ENCODE measurements at regions of chr1 and their contacts with region 1.

Region 1: DNA sequence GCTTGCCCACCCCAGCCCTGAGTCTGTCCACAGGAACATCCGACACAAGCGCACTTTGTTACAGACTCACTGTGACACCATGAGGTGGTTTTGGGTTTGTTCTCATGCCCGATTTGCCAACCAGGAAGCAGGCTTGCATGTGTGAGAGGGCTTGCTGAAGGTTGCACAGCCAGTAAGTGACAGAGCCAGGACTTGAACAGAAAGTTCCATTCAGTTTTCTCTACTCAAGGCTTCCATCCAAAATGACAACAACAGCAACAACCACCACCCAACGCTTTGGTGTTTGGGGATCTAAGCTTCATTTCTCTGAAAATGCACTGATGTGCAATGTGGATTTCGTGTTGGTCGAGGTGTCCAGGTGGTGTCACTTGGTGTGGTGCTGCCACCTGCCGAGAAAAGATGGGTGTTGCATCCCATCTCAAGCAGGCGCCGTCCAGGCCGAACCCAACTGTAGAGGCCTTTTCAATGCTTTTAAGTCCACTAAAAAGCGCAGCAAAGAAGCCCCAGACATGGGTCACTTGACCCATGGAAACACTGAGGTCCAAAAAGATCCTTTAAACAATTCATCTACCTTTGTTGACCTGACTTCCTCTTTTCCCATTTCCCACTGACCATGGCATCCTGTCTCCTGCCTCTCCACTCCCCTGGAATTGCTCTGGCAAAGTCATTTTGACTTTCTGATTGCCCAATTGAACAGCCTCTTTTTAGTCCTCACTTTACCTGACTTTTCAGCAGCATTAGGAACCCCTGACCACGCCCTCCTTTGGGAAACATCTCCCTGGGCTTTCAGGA is 12.2 kb downstream of the CITED4 start:
- DNase-seq: peak; percentile 70
- H3K4me3 Mint-ChIP-seq: no peak overlapping the region
- H3K27ac Mint-ChIP-seq: peak overlapping the region; percentile 4
- H3K4me1 Mint-ChIP-seq: peaks cover 34% of the 10 kb centered on the region
- H3K27me3 Mint-ChIP-seq: no peaks in the 10 kb centered on the region

Region 2: DNA sequence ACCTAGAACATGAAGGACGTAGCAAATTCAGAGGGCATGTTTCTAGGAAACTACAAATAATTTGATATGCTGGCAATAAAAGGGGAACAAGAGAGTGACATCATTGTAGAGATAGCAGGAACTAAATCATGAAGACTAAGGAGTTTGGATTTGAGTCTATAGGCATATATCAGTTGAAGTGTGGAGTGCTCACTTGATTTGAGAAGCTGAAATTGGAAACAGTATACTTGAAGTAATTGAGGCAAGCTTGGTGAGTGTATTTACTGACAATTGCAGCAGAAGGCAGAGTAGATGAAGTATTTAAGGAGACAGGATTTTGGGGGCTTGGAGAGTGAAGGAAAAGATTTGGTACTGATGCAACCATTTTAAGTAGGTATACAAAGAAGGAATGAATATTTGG is 608.6 kb before region 1 on chr1:
- intact Hi-C with region 1: no loop called
- DNase-seq: no peak
- H3K4me3 Mint-ChIP-seq: peak overlapping the region; percentile 23
- H3K27ac Mint-ChIP-seq: peak overlapping the region; percentile 94
- H3K4me1 Mint-ChIP-seq: peaks cover 77% of the 10 kb centered on the region
- H3K27me3 Mint-ChIP-seq: no peaks in the 10 kb centered on the region

Region 3: GRCh38 chr1:40818264-40818961 is 31.6 kb before region 1 on chr1:
- intact Hi-C with region 1: no loop called
- DNase-seq: peak; percentile 89
- H3K4me3 Mint-ChIP-seq: peak overlapping the region; percentile 66
- H3K27ac Mint-ChIP-seq: peak overlapping the region; percentile 52
- H3K4me1 Mint-ChIP-seq: peaks cover 4% of the 10 kb centered on the region
- H3K27me3 Mint-ChIP-seq: peaks cover 9% of the 10 kb centered on the region

Region 4: DNA sequence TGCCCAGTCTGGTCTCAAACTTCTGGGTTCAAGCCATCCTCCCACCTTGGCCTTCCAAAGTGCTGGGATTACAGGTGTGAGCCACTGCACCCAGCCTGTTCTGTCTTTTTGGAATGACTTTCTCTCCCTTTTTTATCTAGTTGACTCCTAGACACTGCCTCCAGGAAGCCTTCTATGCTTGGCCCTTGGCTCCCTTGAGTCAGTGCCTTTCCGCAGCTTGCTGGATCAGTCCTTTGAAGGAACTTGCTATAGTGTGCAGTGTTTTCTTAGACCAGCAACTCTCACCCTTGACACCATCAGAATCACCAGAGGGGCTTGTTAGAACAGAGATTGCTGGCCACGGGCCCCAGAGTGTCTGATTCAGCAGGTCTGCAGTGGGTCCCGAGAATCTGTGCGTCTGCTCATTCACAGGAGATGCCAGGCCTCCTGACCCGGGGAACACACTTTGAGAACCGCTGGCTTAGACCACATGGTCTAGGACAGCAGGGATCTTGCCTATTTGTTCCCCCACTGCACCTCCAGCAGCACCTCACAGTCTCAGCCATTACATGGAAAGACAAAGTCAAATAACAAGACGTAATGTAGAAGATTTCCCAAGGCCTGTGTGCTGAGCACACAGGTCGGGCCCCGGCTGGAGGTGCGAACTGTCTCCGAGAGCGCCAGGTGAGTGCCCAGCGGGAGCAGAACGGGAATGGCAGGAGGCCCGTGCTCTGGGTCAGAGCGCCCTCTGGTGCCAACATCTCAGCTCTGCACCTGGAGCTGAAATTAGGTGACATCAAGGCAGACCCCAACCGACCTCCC is 102.1 kb after region 1 on chr1:
- intact Hi-C with region 1: loop called (anchors 2 kb)
- DNase-seq: peak; percentile 45
- H3K4me3 Mint-ChIP-seq: no peak overlapping the region
- H3K27ac Mint-ChIP-seq: no peak overlapping the region
- H3K4me1 Mint-ChIP-seq: peaks cover 8% of the 10 kb centered on the region
- H3K27me3 Mint-ChIP-seq: peaks cover 15% of the 10 kb centered on the region